ENCODE measurements at regions of chr22 and their contacts with region 1.

Region 1: GRCh38 chr22:37544955-37545699 is 15.2 kb upstream of the CDC42EP1 start:
- DNase-seq: peak in 1 of 2 donors; percentile 83
- H3K4me3 ChIP-seq: peak overlapping the region; percentile 35 to 44
- H3K27ac ChIP-seq: peak overlapping the region; percentile 93 to 99
- H3K4me1 ChIP-seq: peaks cover 23 to 50% of the 10 kb centered on the region in 2 donors
- H3K27me3 ChIP-seq: no peaks in the 10 kb centered on the region
- CTCF ChIP-seq: peak; percentile 58 to 86 (median 77)

Region 2: DNA sequence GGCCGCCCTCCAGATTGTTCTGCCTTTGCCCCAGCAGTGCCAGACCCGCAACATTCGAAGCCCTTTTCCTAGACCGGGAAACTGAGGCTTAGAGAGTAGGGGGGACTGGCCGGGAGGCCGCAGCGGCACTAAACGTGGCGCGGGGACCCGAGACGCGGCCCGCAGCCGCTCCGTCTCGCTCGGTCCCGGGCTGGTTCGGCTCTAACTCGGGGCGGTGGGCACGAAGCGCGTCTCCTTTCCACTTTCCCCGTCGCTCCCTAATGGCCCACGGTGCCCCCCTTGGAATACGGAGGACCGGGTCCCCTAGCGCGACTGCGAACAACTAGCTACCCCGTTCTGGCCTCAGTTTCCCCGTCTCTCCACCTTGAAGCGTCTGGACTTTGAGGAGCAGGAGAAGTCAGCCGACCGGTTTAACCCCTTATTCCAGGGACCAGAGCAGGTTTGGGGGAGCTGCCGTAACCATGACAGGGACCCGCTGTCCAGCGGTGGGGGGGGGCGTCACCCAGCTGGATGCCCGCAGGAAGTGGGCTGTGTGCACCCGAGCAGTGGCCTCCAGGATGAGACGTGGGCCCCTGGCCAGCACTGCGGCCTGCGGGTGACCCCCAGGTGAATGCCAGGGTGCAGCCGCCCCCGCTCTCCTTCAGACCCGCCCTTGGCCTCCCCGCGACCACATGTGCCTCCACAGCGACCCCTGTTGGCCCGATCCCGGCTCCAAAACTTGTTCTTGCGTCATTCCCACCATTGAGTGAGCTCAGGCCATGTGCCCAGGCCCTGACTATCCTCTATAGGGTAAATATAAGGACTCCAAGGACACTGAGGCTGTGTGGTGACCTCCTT is 16.3 kb after region 1 on chr22:
- intact Hi-C with region 1: loop called (anchors 1 kb)
- DNase-seq: peak; percentile 79 to 97
- H3K4me3 ChIP-seq: peak overlapping the region; percentile 84 to 95
- H3K27ac ChIP-seq: peak overlapping the region; percentile 98 to 99
- H3K4me1 ChIP-seq: peaks cover 39 to 52% of the 10 kb centered on the region in 2 donors
- H3K27me3 ChIP-seq: no peaks in the 10 kb centered on the region
- CTCF ChIP-seq: peak; percentile 81 to 91 (median 84)

Region 3: GRCh38 chr22:37566903-37567820 is 22.0 kb after region 1 on chr22:
- intact Hi-C with region 1: loop called (anchors 1 kb)
- DNase-seq: peak in 1 of 2 donors; percentile 91
- H3K4me3 ChIP-seq: peak overlapping the region in 1 of 2 donors; percentile 30
- H3K27ac ChIP-seq: peak overlapping the region; percentile 98 to 99
- H3K4me1 ChIP-seq: peaks cover 39 to 59% of the 10 kb centered on the region in 2 donors
- H3K27me3 ChIP-seq: no peaks in the 10 kb centered on the region
- CTCF ChIP-seq: peak; percentile 89 to 94 (median 94)

Region 4: DNA sequence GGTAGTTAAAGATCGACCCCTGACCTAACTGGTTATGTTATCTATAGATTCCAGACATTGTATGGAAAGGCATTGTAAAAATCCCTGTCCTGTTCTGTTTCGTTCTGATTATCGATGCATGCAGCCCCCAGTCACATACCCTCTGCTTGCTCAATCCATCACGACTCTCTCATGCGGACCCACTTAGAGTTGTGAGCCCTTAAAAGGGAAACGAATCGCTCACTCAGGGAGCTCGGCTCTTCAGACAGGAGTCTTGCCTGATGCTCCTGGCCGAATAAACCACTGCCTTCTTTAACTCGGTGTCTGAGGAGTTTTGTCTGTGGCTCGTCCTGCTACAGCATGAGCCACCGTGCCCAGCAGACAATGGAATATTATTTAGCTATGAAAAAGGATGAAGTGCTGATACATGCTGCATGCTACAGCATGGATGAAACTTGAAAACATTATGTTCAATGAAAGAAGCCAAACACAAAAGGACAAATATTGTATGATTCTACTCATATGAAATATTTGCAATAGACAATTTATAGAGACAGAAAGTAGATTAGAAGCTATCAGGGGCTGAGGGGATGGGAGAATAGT is 46.8 kb after region 1 on chr22:
- intact Hi-C with region 1: loop called (anchors 2 kb)
- DNase-seq: no peak
- H3K4me3 ChIP-seq: no peak overlapping the region
- H3K27ac ChIP-seq: no peak overlapping the region
- H3K4me1 ChIP-seq: no peaks in the 10 kb centered on the region
- H3K27me3 ChIP-seq: no peaks in the 10 kb centered on the region
- CTCF ChIP-seq: no peak

Region 5: DNA sequence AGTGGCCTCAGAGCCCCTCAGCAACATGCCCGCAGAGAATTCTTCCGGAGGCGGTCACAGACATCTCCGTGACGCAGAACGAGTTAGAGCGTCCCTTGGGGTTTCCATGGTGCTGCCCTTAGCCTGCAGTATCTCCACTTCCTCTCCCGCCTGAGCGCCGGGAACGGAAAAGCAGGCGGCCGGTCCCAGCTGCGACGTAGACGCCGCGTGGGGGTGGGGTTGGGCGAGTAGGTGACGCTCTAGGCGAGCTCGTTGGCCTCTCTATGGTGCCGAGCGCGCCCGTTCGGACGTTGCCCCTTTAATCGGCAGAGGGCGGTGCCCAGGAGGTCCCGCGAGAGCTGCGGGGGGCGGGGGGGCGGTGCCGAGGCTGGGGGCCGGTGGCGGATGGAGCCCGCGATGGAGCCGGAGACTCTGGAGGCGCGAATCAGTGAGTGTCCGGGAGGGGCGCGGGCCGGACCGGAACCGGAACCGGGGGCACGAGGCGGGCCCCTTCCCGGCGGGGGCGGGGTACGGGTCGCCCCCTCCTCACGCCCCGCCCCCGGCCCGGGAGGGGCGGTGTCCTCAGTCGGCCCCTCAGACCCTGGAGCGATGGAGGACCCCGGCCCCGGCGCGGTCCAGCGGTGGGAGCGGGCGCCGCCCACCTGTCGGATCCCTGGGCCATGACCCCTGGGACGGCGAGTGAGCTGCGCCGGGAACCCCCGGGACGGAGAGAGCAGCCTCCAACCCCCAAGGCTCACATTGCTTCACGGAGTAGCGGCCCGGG is 63.5 kb after region 1 on chr22 and contains the start of gene GGA1:
- intact Hi-C with region 1: loop called (anchors 5 kb)
- DNase-seq: peak; percentile 94 to 97
- H3K4me3 ChIP-seq: peak within 1 kb of the TSS; percentile 79 to 81
- H3K27ac ChIP-seq: peak within 1 kb of the TSS; percentile 92 to 94
- H3K4me1 ChIP-seq: peaks cover 5 to 37% of the 10 kb centered on the region in 2 donors
- H3K27me3 ChIP-seq: no peaks in the 10 kb centered on the region
- CTCF ChIP-seq: peak in 1 of 3 experiments; percentile 13
- total RNA-seq, gene GGA1: 53.5 TPM

Measured in ascending aorta (tissue), 2 donors.